SK-N-SH (cell line): ENCODE measurements at regions of chr1 and their contacts with region 1.

Region 1: GRCh38 chr1:197356723-197357533 is 88.9 kb downstream of the CRB1 start:
- DNase-seq: peak; percentile 63
- H3K4me3 ChIP-seq: no peak overlapping the region
- H3K27ac ChIP-seq: no peak overlapping the region
- H3K4me1 ChIP-seq: no peaks in the 10 kb centered on the region; a peak in 1 of 4 replicates
- H3K27me3 ChIP-seq: no peaks in the 10 kb centered on the region
- CTCF ChIP-seq: peak; percentile 80
- EP300 ChIP-seq: no peak
- RAD21 ChIP-seq: peak; percentile 93

Region 2: GRCh38 chr1:197224160-197224559 is 132.8 kb before region 1 on chr1:
- CTCF ChIA-PET with region 1: interaction called, 34 read pairs
- POLR2A ChIA-PET with region 1: no interaction called
- DNase-seq: peak; percentile 13
- H3K4me3 ChIP-seq: no peak overlapping the region
- H3K27ac ChIP-seq: no peak overlapping the region
- H3K4me1 ChIP-seq: peaks cover 0 to 10% of the 10 kb centered on the region in 2 experiments; a peak in 2 of 4 replicates
- H3K27me3 ChIP-seq: no peaks in the 10 kb centered on the region
- CTCF ChIP-seq: peak; percentile 63
- EP300 ChIP-seq: no peak
- RAD21 ChIP-seq: peak; percentile 52

Region 3: DNA sequence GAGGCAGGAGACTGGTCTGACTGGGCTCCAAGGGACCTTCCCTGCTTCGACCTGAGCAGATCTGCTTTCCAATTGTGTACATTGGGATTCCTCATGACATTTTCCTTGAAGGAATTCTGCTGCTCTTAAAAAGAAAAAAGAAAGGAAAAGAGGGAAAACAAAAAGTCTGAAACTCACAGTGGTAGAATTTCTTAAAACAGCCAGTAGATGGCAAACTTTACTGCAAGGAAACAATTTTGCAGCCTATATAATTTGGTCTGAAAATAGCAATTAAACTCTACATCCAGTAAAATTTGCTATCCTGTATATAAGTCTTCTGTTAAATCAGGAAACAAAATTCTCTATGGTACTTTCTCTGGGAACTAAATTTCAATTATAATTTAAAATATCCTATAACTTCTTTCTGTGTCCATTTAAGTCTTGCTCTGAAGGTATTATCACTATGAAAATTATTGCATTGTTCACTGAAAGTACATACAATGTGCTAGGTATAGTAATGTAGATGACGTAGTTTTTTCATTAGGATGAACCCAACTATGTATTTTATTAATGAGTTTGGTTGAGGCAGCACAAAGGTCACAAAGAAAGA is 29.1 kb before region 1 on chr1:
- CTCF ChIA-PET with region 1: interaction called, 37 read pairs
- POLR2A ChIA-PET with region 1: no interaction called
- DNase-seq: peak; percentile 16
- H3K4me3 ChIP-seq: peak overlapping the region in 1 of 2 experiments; percentile 10; a peak in 1 of 4 replicates
- H3K27ac ChIP-seq: no peak overlapping the region
- H3K4me1 ChIP-seq: no peaks in the 10 kb centered on the region; a peak in 1 of 4 replicates
- H3K27me3 ChIP-seq: no peaks in the 10 kb centered on the region
- CTCF ChIP-seq: peak; percentile 79
- EP300 ChIP-seq: no peak
- RAD21 ChIP-seq: peak; percentile 67

Region 4: DNA sequence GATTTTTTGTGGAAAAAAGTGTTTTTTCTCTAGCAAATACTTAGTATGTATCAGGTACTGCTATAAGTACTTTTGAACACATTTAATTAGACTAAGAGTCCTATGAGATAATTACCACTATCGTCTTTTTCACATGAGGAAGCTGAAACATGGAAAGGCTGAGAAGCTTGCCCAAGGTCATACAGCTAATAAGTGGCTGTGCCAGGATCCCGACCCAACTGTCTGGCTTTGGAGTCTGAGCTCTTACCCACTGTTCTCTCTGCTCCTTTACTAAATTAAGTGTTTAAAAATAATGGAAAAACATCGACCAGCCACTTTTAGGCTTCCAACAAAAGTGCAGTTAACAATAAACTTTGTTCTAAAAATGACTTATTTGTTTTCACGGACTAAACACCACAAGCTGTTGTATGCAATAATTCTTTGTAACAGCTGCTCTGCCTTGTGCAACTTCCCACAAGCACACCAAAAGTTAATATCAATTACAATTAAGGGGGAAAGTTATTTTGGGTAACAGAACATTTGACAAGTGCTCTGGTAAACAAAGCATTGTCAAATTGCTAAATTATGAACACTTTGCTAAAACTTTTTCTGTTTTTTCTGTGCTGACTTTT is 13.2 kb before region 1 on chr1:
- CTCF ChIA-PET with region 1: interaction called, 10 read pairs
- POLR2A ChIA-PET with region 1: no interaction called
- DNase-seq: no peak
- H3K4me3 ChIP-seq: no peak overlapping the region
- H3K27ac ChIP-seq: no peak overlapping the region
- H3K4me1 ChIP-seq: peaks cover 0 to 7% of the 10 kb centered on the region in 2 experiments; a peak in 2 of 4 replicates
- H3K27me3 ChIP-seq: no peaks in the 10 kb centered on the region
- CTCF ChIP-seq: no peak
- EP300 ChIP-seq: no peak
- RAD21 ChIP-seq: no peak

Region 5: GRCh38 chr1:197481101-197481500 is 124.2 kb after region 1 on chr1:
- CTCF ChIA-PET with region 1: no interaction called
- POLR2A ChIA-PET with region 1: no interaction called
- DNase-seq: no peak
- H3K4me3 ChIP-seq: no peak overlapping the region
- H3K27ac ChIP-seq: no peak overlapping the region
- H3K4me1 ChIP-seq: peaks cover 0 to 5% of the 10 kb centered on the region in 2 experiments; a peak in 2 of 4 replicates
- H3K27me3 ChIP-seq: no peaks in the 10 kb centered on the region
- CTCF ChIP-seq: no peak
- EP300 ChIP-seq: no peak
- RAD21 ChIP-seq: no peak